AG04449 (cell line): ENCODE measurements at regions of chr12 and their contacts with region 1.

Region 1: GRCh38 chr12:68223083-68223747 is 2.4 kb downstream of the IL26 start:
- DNase-seq: peak; percentile 47
- H3K4me3 ChIP-seq: no peak overlapping the region; the same call in 1 of the 2 replicates
- CTCF ChIP-seq: peak; percentile 80

Region 2: DNA sequence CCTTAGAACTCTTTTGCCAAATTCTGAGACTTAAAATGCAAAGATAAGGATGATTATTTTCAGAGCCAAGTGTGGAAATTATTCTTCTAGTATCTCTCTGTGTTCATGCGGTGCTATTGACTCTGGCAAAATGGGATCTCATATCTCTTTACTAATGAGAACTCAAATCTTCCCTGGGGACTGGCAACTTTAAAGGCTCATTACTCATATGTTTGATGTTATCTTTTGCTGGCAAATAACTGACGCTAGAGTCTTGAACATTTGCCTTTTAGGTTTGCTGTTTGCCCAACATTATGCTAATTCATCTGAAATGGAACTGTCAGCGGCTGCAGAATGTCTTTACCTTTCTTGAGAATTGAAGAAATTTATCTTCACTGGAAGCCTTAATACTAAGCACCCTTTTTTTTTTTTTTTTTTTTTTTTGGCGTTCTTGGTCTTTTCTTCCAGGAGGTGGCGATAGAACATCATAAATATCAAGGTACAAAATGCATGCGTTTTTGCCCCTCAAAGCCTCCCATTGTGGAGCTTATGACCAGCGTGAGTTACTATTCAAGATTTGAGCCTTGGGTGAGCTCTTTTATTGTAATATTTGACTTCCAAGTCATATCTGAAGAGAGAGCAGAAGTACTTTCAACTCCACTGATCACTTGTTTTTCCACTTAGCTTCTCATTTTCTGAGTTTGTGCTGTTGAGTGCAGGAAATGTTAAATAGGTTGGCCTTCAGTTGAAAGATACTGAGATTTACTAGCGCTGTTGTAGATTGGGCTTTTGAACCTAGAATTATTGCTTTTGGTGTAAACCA is 867.4 kb before region 1 on chr12:
- CTCF ChIA-PET with region 1: interaction called, 18 read pairs
- POLR2A ChIA-PET with region 1: no interaction called
- DNase-seq: no peak
- H3K4me3 ChIP-seq: no peak overlapping the region
- CTCF ChIP-seq: peak; percentile 18

Region 3: DNA sequence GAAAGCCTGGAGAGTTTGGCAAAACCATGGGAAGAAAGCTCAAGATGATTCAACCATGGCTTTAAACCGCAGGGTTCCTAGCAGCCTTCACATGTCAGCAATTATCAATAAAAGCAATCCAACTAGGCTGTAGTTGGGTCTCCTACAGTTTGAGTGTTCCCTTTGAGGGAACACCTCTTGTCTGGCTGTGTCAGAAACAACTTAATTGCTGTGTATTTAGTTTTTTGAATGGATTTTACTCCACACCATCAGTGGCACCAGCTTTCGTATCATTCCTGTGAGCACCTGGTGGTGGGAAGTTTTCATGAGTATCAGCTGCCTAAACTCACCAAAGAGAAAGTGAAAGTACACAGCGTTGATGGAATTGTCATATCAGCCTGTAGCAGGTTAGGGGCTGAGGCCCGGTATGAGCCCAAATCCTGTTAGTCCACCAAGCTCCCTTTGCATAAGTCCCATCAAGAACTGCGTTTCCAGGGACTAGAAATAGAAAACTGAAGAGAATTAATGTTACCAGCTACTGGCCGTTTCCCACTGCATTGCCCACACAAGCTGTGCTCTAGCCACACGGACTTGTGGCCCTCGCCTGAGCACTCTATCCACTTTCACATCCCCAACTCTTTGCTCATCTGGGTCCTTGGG is 13.3 kb after region 1 on chr12:
- CTCF ChIA-PET with region 1: interaction called, 55 read pairs
- POLR2A ChIA-PET with region 1: no interaction called
- DNase-seq: no peak
- H3K4me3 ChIP-seq: no peak overlapping the region
- CTCF ChIP-seq: no peak

Region 4: GRCh38 chr12:68310370-68310769 is 87.2 kb after region 1 on chr12:
- CTCF ChIA-PET with region 1: interaction called, 212 read pairs
- POLR2A ChIA-PET with region 1: no interaction called
- DNase-seq: peak; percentile 86
- H3K4me3 ChIP-seq: no peak overlapping the region
- CTCF ChIP-seq: no peak

Region 5: GRCh38 chr12:68326716-68327115 is 103.5 kb after region 1 on chr12:
- CTCF ChIA-PET with region 1: interaction called, 64 read pairs
- POLR2A ChIA-PET with region 1: no interaction called
- DNase-seq: no peak
- H3K4me3 ChIP-seq: no peak overlapping the region
- CTCF ChIP-seq: no peak